ENCODE measurements at regions of chr16 and their contacts with region 1.

Region 1: DNA sequence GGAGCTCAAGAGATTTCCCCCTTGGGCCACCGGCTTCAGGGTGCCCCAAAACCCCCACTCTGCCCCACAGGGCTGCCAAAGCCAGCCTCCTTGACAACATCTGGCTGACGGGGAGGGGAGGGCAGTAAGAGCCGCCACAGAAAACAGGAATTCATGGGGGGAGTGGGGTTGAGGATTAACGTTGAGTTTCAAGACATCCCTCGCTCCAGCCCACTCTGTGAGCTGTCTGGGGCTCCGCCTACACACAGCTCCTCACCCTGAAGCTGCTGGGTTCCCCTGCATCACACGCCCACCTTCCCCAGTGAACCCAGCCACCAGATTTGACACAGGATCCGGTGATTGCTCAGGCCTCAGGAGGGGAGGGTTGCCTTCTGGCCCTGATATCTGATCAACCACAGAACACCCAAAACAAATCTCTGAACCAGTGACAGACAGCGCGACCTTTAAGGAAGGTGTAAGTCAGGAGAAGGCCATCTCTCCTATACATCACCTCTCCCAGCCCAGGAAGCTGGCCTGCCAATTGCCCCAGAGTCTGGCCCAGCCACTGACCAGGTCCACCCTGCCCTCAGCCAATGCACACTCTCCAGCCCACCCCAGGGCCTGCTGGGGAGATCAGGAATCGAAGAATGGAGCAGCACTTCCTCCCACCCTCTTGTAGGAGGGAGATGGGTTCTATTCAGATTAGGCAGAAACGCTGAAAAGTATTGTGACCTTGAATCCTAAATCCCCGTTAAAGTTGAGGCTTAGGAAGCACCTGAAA is 132.1 kb downstream of the CLEC16A start:
- DNase-seq: peak; percentile 44
- ATAC-seq: peak; percentile 70
- H3K4me3 ChIP-seq: no peak overlapping the region
- H3K4me3 Mint-ChIP-seq: peak overlapping the region; percentile 81
- H3K27ac ChIP-seq: peak overlapping the region; percentile 63 to 64
- H3K27ac Mint-ChIP-seq: peak overlapping the region; percentile 97
- H3K4me1 ChIP-seq: peaks cover 53 to 57% of the 10 kb centered on the region in 2 donors
- H3K4me1 Mint-ChIP-seq: peaks cover 77% of the 10 kb centered on the region
- H3K27me3 ChIP-seq: no peaks in the 10 kb centered on the region
- H3K27me3 Mint-ChIP-seq: no peaks in the 10 kb centered on the region
- CTCF ChIP-seq: no peak

Region 2: DNA sequence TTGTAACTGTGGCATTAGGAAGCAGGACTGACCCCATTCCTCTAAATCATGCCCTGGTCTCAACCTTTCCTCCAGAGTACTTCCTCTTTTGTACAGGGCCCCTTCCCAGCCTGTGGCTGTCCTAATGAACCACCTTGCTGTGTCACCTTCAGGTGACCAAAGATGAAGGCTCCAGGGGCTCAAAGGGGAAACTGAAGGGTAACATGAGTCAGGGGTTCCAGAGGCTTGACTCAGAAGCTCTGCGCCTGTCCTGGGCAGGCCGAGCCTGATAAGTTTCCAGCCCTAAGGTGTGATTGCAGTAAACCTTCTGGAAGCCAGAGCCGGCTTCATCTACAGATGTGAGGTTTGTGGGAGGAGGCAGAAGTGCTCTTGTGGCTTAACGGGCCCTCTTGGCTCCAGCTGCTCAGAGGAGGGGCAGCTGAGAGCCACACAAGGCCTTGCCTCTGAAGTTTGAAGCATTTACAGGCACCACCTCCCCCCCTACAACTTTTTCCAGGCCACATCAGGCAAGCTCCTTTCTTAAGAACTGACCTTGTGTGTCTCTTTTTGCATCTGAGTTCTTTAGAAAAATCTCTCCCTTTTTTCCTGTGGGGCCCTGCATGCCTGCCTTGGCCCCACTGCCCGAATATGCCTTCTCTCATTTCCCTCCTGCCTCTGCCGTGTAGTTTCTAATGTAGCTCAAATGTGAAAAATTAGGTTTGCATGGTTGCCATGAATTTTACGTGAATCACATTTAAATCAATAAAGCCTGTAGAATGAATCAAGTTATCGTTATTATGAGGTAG is 17.8 kb after region 1 on chr16:
- CTCF ChIA-PET with region 1: interaction called, 8 read pairs
- POLR2A ChIA-PET with region 1: interaction called, 15 read pairs
- intact Hi-C with region 1: loop called (anchors 1 kb)
- DNase-seq: peak; percentile 54
- ATAC-seq: peak; percentile 62
- H3K4me3 ChIP-seq: no peak overlapping the region
- H3K4me3 Mint-ChIP-seq: peak overlapping the region; percentile 67
- H3K27ac ChIP-seq: peak overlapping the region; percentile 48 to 54
- H3K27ac Mint-ChIP-seq: peak overlapping the region; percentile 92
- H3K4me1 ChIP-seq: peaks cover 27 to 33% of the 10 kb centered on the region in 2 donors
- H3K4me1 Mint-ChIP-seq: peaks cover 38% of the 10 kb centered on the region
- H3K27me3 ChIP-seq: no peaks in the 10 kb centered on the region
- H3K27me3 Mint-ChIP-seq: no peaks in the 10 kb centered on the region
- CTCF ChIP-seq: no peak

Region 3: DNA sequence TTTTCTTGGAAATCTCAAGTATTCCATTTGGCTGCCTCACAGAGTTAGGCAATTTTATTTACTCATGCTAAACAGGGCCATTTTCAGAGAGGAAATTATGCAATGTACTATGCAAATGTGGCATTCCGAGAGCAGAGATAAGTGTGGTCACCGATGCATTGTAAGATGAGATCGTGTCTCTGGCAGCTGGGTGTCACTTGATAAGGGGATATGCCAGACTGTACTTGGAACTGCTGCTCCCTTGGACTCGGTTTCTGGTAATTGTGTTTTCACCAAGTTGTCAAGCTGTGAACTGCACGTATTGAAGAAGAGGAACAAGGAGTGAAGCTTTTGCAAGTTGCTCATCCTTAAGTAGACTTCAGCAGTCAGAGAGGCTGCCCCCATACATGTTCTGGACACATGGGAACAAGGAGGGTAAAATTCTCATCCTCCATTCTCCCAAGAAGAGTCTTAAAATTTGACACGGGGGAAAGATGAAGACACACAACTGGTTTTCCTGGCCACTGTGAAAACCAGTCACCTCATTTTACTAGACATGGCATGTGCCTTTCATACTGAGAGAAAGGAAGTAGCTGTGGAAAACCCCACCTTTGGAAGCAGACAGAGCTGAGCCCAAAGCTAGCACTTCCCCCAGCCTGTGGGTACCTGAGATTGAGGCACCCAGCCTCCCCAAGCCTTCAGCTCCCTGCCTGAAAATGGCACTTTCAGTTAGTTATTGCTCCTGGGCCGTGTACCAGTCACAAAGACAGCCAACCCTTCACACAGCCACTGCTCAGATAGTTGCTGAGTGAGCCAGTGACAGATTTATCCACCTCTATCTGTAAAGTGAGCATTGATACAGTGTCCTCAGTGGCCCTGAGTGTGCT is 28.8 kb after region 1 on chr16:
- CTCF ChIA-PET with region 1: interaction called, 3 read pairs
- POLR2A ChIA-PET with region 1: interaction called, 5 read pairs
- intact Hi-C with region 1: loop called (anchors 1 kb)
- DNase-seq: peak; percentile 70
- ATAC-seq: peak; percentile 92
- H3K4me3 ChIP-seq: peak overlapping the region in 2 of 5 experiments; percentile 8
- H3K4me3 Mint-ChIP-seq: peak overlapping the region; percentile 78
- H3K27ac ChIP-seq: peak overlapping the region in 1 of 2 donors; percentile 68
- H3K27ac Mint-ChIP-seq: peak overlapping the region; percentile 83
- H3K4me1 ChIP-seq: peaks cover 18 to 23% of the 10 kb centered on the region in 2 donors
- H3K4me1 Mint-ChIP-seq: peaks cover 34% of the 10 kb centered on the region
- H3K27me3 ChIP-seq: no peaks in the 10 kb centered on the region
- H3K27me3 Mint-ChIP-seq: no peaks in the 10 kb centered on the region
- CTCF ChIP-seq: no peak

Region 4: GRCh38 chr16:11224096-11224893 is 147.9 kb after region 1 on chr16:
- CTCF ChIA-PET with region 1: interaction called, 4 read pairs
- POLR2A ChIA-PET with region 1: interaction called, 4 read pairs
- intact Hi-C with region 1: loop called (anchors 2 kb)
- DNase-seq: peak; percentile 65
- ATAC-seq: peak; percentile 34
- H3K4me3 ChIP-seq: peak overlapping the region in 1 of 5 experiments; percentile 61
- H3K4me3 Mint-ChIP-seq: peak overlapping the region; percentile 83
- H3K27ac ChIP-seq: peak overlapping the region; percentile 72 to 85
- H3K27ac Mint-ChIP-seq: peak overlapping the region; percentile 93
- H3K4me1 ChIP-seq: peaks cover 28 to 31% of the 10 kb centered on the region in 2 donors
- H3K4me1 Mint-ChIP-seq: peaks cover 34% of the 10 kb centered on the region
- H3K27me3 ChIP-seq: no peaks in the 10 kb centered on the region
- H3K27me3 Mint-ChIP-seq: no peaks in the 10 kb centered on the region
- CTCF ChIP-seq: no peak

Measured in B cell (primary cell).